ENCODE measurements at regions of chr15 and their contacts with region 1.

Region 1: DNA sequence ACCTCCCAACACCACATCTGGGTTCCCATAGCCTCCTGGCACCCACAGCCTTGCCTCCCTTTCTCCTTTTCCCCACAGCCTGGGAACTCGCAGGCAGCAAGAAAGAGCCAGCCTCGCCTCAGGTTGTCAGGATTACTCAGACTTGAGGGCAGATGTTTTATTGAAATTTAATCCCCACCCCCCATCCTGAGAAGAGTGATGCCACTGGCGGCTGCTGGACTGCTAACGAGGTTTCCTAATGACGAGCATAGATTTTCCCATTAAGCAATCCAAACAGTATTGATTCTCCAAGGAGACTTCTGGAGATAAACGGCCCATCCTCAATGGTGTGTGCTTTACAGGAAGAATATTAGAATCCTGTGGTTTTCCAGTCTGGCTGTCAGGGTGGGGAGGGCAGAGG is 13.7 kb downstream of the SHF start:
- DNase-seq: no peak
- H3K4me3 ChIP-seq: no peak overlapping the region
- H3K27ac ChIP-seq: no peak overlapping the region
- H3K27me3 ChIP-seq: no peaks in the 10 kb centered on the region
- CTCF ChIP-seq: no peak

Region 2: GRCh38 chr15:45161666-45162065 is 12.4 kb before region 1 on chr15:
- CTCF ChIA-PET with region 1: interaction called, 27 read pairs
- POLR2A ChIA-PET with region 1: no interaction called
- DNase-seq: no peak
- H3K4me3 ChIP-seq: no peak overlapping the region
- H3K27ac ChIP-seq: no peak overlapping the region
- H3K27me3 ChIP-seq: no peaks in the 10 kb centered on the region
- CTCF ChIP-seq: no peak

Region 3: GRCh38 chr15:45361878-45362277 is 187.8 kb after region 1 on chr15:
- CTCF ChIA-PET with region 1: no interaction called
- POLR2A ChIA-PET with region 1: no interaction called
- DNase-seq: no peak
- H3K4me3 ChIP-seq: no peak overlapping the region
- H3K27ac ChIP-seq: no peak overlapping the region
- H3K27me3 ChIP-seq: peaks cover 2% of the 10 kb centered on the region
- CTCF ChIP-seq: no peak